Activated B cell treated with CpG ODN at 0.5 μM for 24 hours (primary cell): ENCODE measurements at regions of chr16 and their contacts with region 1.

Region 1: GRCh38 chr16:66406534-66407221 is 20.4 kb upstream of the BEAN1 start:
- DNase-seq: peak; percentile 81
- ATAC-seq: peak; percentile 92
- H3K4me3 Mint-ChIP-seq: peak overlapping the region; percentile 69
- H3K27ac Mint-ChIP-seq: no peak overlapping the region
- H3K4me1 Mint-ChIP-seq: peaks cover 16% of the 10 kb centered on the region
- H3K27me3 Mint-ChIP-seq: peaks cover 34% of the 10 kb centered on the region
- CTCF ChIP-seq: no peak

Region 2: GRCh38 chr16:66483689-66484481 is 77.2 kb after region 1 on chr16:
- CTCF ChIA-PET with region 1: interaction called, 11 read pairs
- POLR2A ChIA-PET with region 1: no interaction called
- intact Hi-C with region 1: loop called (anchors 1 kb)
- DNase-seq: peak; percentile 69
- ATAC-seq: peak; percentile 94
- H3K4me3 Mint-ChIP-seq: no peak overlapping the region
- H3K27ac Mint-ChIP-seq: no peak overlapping the region
- H3K4me1 Mint-ChIP-seq: peaks cover 15% of the 10 kb centered on the region
- H3K27me3 Mint-ChIP-seq: no peaks in the 10 kb centered on the region
- CTCF ChIP-seq: peak; percentile 66

Region 3: GRCh38 chr16:66588981-66589713 is 182.5 kb after region 1 on chr16:
- CTCF ChIA-PET with region 1: interaction called, 10 read pairs
- POLR2A ChIA-PET with region 1: no interaction called
- intact Hi-C with region 1: loop called (anchors 1 kb)
- DNase-seq: no peak
- ATAC-seq: peak; percentile 87
- H3K4me3 Mint-ChIP-seq: peak overlapping the region; percentile 13
- H3K27ac Mint-ChIP-seq: no peak overlapping the region
- H3K4me1 Mint-ChIP-seq: peaks cover 34% of the 10 kb centered on the region
- H3K27me3 Mint-ChIP-seq: peaks cover 20% of the 10 kb centered on the region
- CTCF ChIP-seq: no peak

Region 4: DNA sequence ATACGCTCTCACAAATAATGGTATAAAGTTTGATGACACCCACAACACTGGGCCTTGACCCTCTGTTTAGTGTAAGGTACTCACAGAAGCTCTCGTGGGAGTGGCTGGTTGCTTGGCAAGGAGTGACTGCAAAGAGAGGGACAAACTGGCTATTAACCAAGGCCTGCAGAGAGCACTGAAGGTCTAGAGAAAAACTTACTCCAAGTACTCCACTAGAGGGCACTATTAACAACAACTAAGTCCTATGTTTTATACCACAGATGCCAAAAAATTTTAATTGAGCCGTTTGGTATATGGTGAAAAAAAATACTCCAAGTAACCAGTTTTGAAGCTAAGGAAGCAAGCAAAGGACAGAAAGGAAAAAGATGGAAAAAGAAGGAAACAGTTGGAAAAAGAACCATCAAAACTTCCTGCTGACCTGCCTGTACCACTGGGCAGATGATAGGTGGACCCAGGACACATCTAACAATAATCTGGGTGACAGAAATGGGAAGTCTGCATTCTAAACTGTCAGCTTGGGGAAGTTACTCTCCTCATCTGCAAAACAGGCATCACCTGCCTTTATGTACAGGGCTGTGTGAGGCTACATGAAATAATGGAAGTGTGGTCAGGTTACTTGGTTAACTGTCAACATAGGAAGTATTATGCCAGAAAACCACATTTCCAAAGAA is 321.6 kb after region 1 on chr16:
- CTCF ChIA-PET with region 1: interaction called, 18 read pairs
- POLR2A ChIA-PET with region 1: no interaction called
- intact Hi-C with region 1: loop called (anchors 1 kb)
- DNase-seq: no peak
- ATAC-seq: peak; percentile 60
- H3K4me3 Mint-ChIP-seq: no peak overlapping the region
- H3K27ac Mint-ChIP-seq: no peak overlapping the region
- H3K4me1 Mint-ChIP-seq: peaks cover 2% of the 10 kb centered on the region
- H3K27me3 Mint-ChIP-seq: no peaks in the 10 kb centered on the region
- CTCF ChIP-seq: peak; percentile 71

Region 5: DNA sequence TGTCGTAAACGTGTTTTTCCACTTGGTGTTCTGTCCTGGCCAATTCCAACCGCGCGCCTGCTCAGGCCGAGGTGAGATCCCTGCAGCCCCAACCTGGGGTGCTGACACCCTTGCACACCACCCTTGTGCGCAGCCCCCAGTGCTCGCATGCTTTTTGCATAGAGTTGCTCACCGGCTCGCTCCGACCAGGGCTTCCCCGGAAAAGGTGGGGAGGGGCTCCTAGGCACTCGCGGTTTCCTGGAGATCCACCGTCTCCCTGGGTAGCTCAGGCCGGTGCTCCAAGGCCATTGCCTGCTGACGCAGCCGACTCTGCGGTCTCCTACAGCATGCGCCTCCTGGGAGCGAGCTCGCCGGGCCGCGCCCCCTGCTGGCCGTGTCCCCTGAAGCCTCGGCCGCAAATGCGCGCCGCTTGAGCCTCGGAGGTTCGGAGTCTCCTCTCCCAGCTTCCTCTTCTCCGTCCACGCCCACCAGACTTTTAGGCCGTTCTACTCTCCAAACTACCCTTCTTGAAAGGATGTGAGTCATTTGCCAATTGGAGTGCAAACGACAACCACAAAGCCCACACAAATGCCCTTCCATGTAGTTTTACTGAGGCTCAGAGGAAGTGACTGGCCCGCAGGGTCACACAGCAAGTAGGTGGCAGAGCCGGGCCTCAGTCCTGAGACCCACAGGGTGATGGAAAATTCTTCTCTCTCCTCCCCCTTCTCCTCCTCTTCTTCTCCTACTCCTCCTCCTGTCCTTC is 466.4 kb after region 1 on chr16:
- CTCF ChIA-PET with region 1: interaction called, 51 read pairs
- POLR2A ChIA-PET with region 1: interaction called, 4 read pairs
- intact Hi-C with region 1: loop called (anchors 1 kb)
- DNase-seq: peak; percentile 87
- ATAC-seq: peak; percentile 95
- H3K4me3 Mint-ChIP-seq: peak overlapping the region; percentile 80
- H3K27ac Mint-ChIP-seq: peak overlapping the region; percentile 76
- H3K4me1 Mint-ChIP-seq: peaks cover 15% of the 10 kb centered on the region
- H3K27me3 Mint-ChIP-seq: no peaks in the 10 kb centered on the region
- CTCF ChIP-seq: peak; percentile 51